Psoas muscle (tissue), 8 donors: ENCODE measurements at regions of chr4 and their contacts with region 1.

Region 1: GRCh38 chr4:168153596-168154440 is 61.5 kb downstream of the ANXA10 start:
- DNase-seq: peak; percentile 63 to 84
- ATAC-seq: peak; percentile 57 to 91 (median 68)
- H3K4me3 ChIP-seq: peak overlapping the region; percentile 51
- H3K27ac ChIP-seq: no peak overlapping the region
- H3K4me1 ChIP-seq: no peaks in the 10 kb centered on the region
- H3K27me3 ChIP-seq: no peaks in the 10 kb centered on the region
- CTCF ChIP-seq: peak; percentile 67

Region 2: DNA sequence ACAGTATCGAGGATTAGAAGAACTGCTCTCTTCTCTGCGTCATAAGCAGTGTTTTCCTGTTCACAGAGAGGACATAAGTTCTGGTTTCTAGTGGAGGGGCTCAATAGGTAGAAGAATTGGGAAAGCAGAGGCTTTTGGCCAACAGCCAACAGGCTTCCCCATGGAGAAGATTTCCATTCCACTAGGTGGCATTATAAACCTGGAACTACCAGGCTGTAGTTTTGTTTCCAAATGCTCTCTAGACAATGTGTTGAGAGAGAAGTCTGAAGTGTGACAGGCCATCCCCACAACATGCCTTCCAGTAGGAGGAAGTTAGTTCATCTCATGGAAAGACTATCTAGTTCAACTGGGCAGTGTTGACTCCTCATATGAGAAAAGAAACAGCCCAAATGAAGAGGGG is 125.2 kb before region 1 on chr4:
- intact Hi-C with region 1: loop called (anchors 5 kb)
- DNase-seq: no peak
- ATAC-seq: peak in 3 of 4 donors; percentile 37 to 63 (median 41)
- H3K4me3 ChIP-seq: no peak overlapping the region
- H3K27ac ChIP-seq: no peak overlapping the region
- H3K4me1 ChIP-seq: no peaks in the 10 kb centered on the region
- H3K27me3 ChIP-seq: no peaks in the 10 kb centered on the region
- CTCF ChIP-seq: peak; percentile 13